ENCODE measurements at regions of chr1 and their contacts with region 1.

Region 1: GRCh38 chr1:147242439-147243227 is at the start of gene CHD1L:
- DNase-seq: peak; percentile 97 to 98 (median 98)
- H3K4me3 ChIP-seq: peak within 1 kb of the TSS; percentile 68 to 95 (median 86)
- H3K27ac ChIP-seq: peak within 1 kb of the TSS; percentile 69 to 87
- H3K4me1 ChIP-seq: peaks cover 16 to 46% (median 31%) of the 10 kb centered on the region in 4 experiments
- H3K27me3 ChIP-seq: no peaks in the 10 kb centered on the region

Region 2: DNA sequence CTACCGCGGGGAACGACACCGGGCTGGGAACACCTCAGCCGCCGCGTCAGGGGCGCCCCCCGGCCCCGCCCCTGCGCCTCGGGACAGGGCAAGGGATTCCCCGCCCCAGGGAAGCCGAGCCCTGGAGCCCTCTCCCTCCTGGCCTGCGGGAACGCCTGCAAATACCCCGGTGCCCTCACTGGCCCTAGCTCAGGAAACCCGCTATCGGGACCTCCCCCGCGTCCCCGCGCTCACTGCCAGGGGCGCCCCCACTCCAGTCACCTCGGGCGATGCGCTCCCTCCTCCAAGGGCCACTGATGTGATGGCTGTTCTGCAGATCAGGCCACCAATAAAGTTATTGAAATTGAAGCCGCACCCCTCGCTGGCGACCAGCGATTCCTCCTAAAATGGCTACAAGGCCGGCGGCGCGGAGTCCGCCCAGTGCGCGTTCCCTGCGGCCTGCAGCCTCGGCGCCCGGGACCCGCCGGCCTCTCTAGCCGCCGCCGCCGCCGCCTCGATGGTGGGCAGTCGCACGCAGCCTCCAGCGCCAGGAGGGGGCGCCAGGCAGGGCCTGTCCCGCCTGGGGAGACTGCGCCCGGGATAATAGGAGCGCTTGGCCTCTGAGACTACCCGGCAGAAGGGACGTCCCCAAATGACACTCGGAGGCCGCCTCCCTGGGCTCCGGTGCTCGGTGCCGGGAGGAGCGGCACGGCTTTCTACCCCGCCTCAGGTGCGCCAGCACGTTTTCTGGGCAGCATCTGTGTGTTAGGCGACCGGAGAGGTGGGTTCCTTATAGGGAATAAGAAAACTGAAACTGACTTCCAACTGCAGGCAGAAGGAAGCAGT is 70.3 kb before region 1 on chr1 and contains the start of gene PRKAB2:
- CTCF ChIA-PET with region 1: interaction called, 11 read pairs
- POLR2A ChIA-PET with region 1: interaction called, 5 read pairs
- DNase-seq: peak; percentile 98 to 99 (median 99)
- H3K4me3 ChIP-seq: peak within 1 kb of the TSS; percentile 95 to 99 (median 97)
- H3K27ac ChIP-seq: peak within 1 kb of the TSS; percentile 65 to 92
- H3K4me1 ChIP-seq: peaks cover 7 to 34% (median 22%) of the 10 kb centered on the region in 4 experiments
- H3K27me3 ChIP-seq: no peaks in the 10 kb centered on the region